Astrocyte of the cerebellum (primary cell): ENCODE measurements at regions of chr1 and their contacts with region 1.

Region 1: GRCh38 chr1:22704440-22705067 is 6.1 kb upstream of the EPHB2 start:
- DNase-seq: peak; percentile 65
- H3K4me3 ChIP-seq: no peak overlapping the region
- CTCF ChIP-seq: peak; percentile 91

Region 2: DNA sequence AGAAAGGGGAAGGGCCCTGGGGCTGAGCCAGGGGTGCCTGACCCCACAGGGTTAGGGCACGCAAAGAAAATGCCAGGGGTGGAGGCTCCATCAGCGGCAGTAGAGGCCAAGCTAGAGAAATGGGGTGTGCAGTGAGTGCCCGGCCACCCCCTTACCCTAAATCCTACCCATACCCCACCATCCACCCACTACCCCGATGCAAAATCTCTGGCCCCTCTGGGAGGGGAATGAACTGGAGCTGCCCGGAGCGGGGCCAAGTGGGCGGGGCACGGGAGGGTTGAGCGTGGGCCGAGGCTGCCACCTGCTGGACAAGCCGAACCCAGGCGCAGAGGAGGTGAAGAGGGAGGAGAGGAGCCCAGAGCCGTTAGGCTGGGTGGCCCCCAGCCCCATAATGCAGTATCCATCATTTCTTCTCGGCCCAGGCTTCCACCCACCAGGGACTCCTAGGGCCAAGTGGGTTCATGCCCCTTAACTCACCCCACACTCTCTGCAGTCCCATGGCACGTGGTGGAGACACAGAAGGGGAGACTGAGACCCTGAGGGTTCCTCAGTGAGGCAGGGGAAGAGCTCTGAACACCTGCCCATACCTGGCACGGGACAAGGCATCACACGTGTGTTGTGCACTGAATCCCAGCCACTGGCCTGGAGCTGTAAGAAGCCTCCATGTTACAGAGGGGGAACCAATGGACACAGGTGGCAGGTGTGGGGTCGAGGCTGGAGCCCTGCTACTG is 62.5 kb before region 1 on chr1:
- in situ Hi-C with region 1: no loop called
- DNase-seq: peak; percentile 8
- H3K4me3 ChIP-seq: no peak overlapping the region
- CTCF ChIP-seq: peak; percentile 90

Region 3: DNA sequence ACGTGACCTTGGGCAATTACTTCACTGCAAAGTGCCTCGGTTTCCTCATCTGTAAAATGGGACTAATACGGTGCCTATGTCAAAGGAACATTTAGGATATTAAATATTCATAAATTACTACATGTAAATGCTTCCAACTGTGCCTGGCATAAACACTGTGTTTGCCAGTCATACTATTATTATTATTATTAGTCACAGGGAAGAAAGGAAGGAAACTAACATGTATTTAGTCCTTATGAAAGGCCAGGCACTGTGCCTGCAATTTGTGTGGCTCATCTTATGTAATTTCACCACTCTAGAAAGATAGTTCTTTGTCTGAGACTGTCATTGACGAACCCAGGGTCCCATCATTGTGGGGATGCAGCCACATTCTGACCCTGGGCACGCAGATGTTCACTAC is 51.1 kb after region 1 on chr1:
- in situ Hi-C with region 1: loop called (anchors 5 kb)
- DNase-seq: no peak
- H3K4me3 ChIP-seq: no peak overlapping the region
- CTCF ChIP-seq: no peak

Region 4: DNA sequence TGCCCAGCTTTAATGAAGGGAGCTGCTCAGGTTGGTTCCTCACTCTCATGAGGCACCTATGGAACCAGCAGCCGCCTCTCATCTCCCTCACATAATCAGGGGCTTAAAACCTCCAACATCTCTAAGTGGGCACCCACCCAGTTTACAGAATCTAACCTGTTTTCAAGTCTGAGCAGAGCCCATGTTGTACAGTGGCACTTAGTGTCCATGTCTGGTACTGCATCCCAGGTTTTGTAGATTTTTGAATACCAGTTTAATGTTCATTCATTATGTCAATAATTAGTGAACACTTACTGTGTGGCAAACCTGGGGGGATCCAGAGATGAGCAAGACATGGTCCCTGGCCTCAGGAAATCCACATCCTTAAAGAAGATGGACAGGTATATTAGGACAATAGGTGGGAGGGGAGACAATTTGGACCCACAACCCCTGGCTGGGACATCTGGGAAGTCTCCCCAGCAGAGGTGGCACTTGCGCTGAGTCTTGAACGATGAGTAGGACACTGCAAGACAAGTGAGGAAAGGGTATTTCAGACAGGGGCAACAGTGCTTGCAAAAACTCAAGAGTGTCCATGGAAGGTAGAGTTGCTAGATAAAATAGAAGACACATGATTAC is 184.8 kb after region 1 on chr1:
- in situ Hi-C with region 1: loop called (anchors 25 kb)
- DNase-seq: peak; percentile 33
- H3K4me3 ChIP-seq: no peak overlapping the region
- CTCF ChIP-seq: peak; percentile 92